ENCODE measurements at regions of chr17 and their contacts with region 1.

Region 1: GRCh38 chr17:75693500-75694481 is 26.7 kb downstream of the SAP30BP start:
- DNase-seq: no peak
- H3K4me3 Mint-ChIP-seq: no peak overlapping the region
- H3K27ac Mint-ChIP-seq: no peak overlapping the region
- H3K4me1 Mint-ChIP-seq: peaks cover 31% of the 10 kb centered on the region
- H3K27me3 Mint-ChIP-seq: no peaks in the 10 kb centered on the region

Region 2: GRCh38 chr17:75673487-75673886 is 20.3 kb before region 1 on chr17:
- CTCF ChIA-PET with region 1: interaction called, 21 read pairs
- POLR2A ChIA-PET with region 1: interaction called, 3 read pairs
- DNase-seq: no peak
- H3K4me3 Mint-ChIP-seq: no peak overlapping the region
- H3K27ac Mint-ChIP-seq: no peak overlapping the region
- H3K4me1 Mint-ChIP-seq: peaks cover 18% of the 10 kb centered on the region
- H3K27me3 Mint-ChIP-seq: no peaks in the 10 kb centered on the region

Region 3: GRCh38 chr17:75759443-75759842 is 65.7 kb after region 1 on chr17:
- CTCF ChIA-PET with region 1: no interaction called
- POLR2A ChIA-PET with region 1: no interaction called
- DNase-seq: no peak
- H3K4me3 Mint-ChIP-seq: no peak overlapping the region
- H3K27ac Mint-ChIP-seq: no peak overlapping the region
- H3K4me1 Mint-ChIP-seq: peaks cover 21% of the 10 kb centered on the region
- H3K27me3 Mint-ChIP-seq: no peaks in the 10 kb centered on the region